ENCODE measurements at regions of chr11 and their contacts with region 1.

Region 1: DNA sequence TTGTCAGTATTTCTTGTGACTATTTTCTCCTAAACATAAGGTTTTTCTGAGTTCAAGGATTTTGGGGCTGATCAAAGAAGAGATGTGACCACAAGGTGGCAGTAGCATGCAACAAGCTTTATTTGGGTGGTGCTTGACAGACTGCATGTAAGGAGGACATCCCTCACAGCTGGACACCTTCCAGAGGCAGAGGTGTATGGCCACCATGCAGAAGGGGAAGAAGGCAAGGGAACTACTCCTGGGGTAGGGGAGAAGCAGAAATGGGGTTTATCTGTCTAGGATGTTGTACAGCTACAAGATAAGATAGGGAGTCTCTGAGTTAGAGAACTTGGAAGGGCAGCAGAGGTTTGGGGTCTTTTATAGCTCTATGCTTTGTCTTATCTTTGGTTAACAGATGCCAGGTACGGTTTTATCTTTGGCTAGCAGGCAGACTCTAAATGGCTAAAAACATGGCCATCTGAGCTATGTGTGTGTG is 5.1 kb upstream of the BIRC2 start:
- DNase-seq: peak; percentile 83
- H3K4me3 ChIP-seq: no peak overlapping the region
- H3K27ac ChIP-seq: no peak overlapping the region
- H3K4me1 ChIP-seq: no peaks in the 10 kb centered on the region
- H3K27me3 ChIP-seq: no peaks in the 10 kb centered on the region
- CTCF ChIP-seq: peak; percentile 66 to 86 (median 80)
- POLR2A ChIP-seq: no peak

Region 2: GRCh38 chr11:102287964-102288724 is 53.7 kb before region 1 on chr11:
- intact Hi-C with region 1: loop called (anchors 2 kb)
- DNase-seq: peak; percentile 50
- H3K4me3 ChIP-seq: no peak overlapping the region
- H3K27ac ChIP-seq: no peak overlapping the region
- H3K4me1 ChIP-seq: no peaks in the 10 kb centered on the region
- H3K27me3 ChIP-seq: no peaks in the 10 kb centered on the region
- CTCF ChIP-seq: peak; percentile 54 to 84 (median 76)
- POLR2A ChIP-seq: no peak

Region 3: GRCh38 chr11:102451681-102452460 is 110.0 kb after region 1 on chr11:
- intact Hi-C with region 1: no loop called
- DNase-seq: peak; percentile 69
- H3K4me3 ChIP-seq: peak overlapping the region; percentile 66 to 92
- H3K27ac ChIP-seq: peak overlapping the region; percentile 89 to 91
- H3K4me1 ChIP-seq: no peaks in the 10 kb centered on the region
- H3K27me3 ChIP-seq: no peaks in the 10 kb centered on the region
- CTCF ChIP-seq: peak in 1 of 4 experiments; percentile 14
- POLR2A ChIP-seq: peak; percentile 53

Region 4: DNA sequence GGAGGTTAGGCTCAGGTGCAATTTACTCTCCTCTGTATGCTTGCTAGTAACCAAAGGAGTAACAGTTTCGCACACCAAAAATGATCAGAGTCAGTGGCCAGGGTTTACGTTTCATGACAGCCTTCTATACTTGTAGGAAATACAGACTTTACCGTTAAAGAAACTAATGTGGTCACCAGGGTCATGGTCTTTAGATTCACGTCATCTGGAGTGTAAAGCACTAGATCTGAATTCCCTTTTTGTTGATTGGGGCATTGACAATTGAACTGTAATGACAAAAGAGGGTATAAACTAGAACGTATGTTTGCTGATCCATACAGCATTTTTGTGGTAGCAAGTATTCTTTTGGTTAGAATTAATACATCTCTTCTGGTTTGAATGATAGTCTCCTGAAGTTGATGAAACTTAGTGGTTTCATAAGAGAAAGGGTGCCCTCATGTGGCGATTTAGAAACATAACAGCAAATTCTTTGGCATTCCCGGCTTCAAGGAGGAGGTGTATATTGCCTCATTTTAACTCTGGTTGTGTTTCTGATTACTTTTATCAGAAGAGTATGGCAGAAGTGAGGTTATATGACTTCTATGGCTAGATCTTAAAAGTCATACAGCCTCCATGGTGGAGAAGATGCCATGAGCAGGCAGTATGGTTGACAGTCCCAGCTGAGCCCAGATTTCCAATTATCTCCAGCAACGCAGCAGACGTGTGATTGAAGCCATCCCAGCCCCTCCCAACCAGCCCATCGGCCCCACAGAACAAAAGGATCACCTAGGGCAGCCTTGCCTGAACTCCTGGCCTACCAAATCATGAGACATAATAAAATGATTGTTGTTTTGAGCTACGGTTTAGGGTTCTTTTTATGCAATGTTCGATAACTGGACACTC is 153.5 kb after region 1 on chr11:
- intact Hi-C with region 1: loop called (anchors 5 kb)
- DNase-seq: peak; percentile 74
- H3K4me3 ChIP-seq: no peak overlapping the region
- H3K27ac ChIP-seq: no peak overlapping the region
- H3K4me1 ChIP-seq: no peaks in the 10 kb centered on the region
- H3K27me3 ChIP-seq: no peaks in the 10 kb centered on the region
- CTCF ChIP-seq: peak in 3 of 4 experiments; percentile 80 to 86 (median 83)
- POLR2A ChIP-seq: no peak

Region 5: GRCh38 chr11:102614485-102614884 is 272.6 kb after region 1 on chr11:
- intact Hi-C with region 1: loop called (anchors 5 kb)
- DNase-seq: no peak
- H3K4me3 ChIP-seq: no peak overlapping the region
- H3K27ac ChIP-seq: no peak overlapping the region
- H3K4me1 ChIP-seq: no peaks in the 10 kb centered on the region
- H3K27me3 ChIP-seq: no peaks in the 10 kb centered on the region
- CTCF ChIP-seq: peak in 1 of 4 experiments; percentile 18
- POLR2A ChIP-seq: no peak